CD8-positive, alpha-beta T cell (primary cell): ENCODE measurements at regions of chr6 and their contacts with region 1.

Region 1: GRCh38 chr6:85354761-85355618 is 94.9 kb upstream of the NT5E start:
- DNase-seq: peak; percentile 14 to 81 (median 64)
- ATAC-seq: peak; percentile 87
- H3K4me3 ChIP-seq: no peak overlapping the region
- H3K4me3 Mint-ChIP-seq: no peak overlapping the region
- H3K27ac ChIP-seq: no peak overlapping the region
- H3K27ac Mint-ChIP-seq: no peak overlapping the region
- H3K4me1 ChIP-seq: no peaks in the 10 kb centered on the region
- H3K4me1 Mint-ChIP-seq: peaks cover 3% of the 10 kb centered on the region
- H3K27me3 ChIP-seq: peaks cover 0 to 2% of the 10 kb centered on the region in 2 experiments
- H3K27me3 Mint-ChIP-seq: no peaks in the 10 kb centered on the region
- CTCF ChIP-seq: peak; percentile 97

Region 2: GRCh38 chr6:85449818-85450759 is 95.1 kb after region 1 on chr6 and contains the start of gene NT5E:
- CTCF ChIA-PET with region 1: interaction called, 14 read pairs
- POLR2A ChIA-PET with region 1: no interaction called
- intact Hi-C with region 1: no loop called
- DNase-seq: peak; percentile 19 to 78 (median 61)
- ATAC-seq: peak; percentile 58
- H3K4me3 ChIP-seq: peak within 1 kb of the TSS; percentile 64 to 65
- H3K4me3 Mint-ChIP-seq: peak within 1 kb of the TSS; percentile 98
- H3K27ac ChIP-seq: peak within 1 kb of the TSS; percentile 40 to 71
- H3K27ac Mint-ChIP-seq: peak within 1 kb of the TSS; percentile 97
- H3K4me1 ChIP-seq: peaks cover 44% of the 10 kb centered on the region
- H3K4me1 Mint-ChIP-seq: peaks cover 62% of the 10 kb centered on the region
- H3K27me3 ChIP-seq: peaks cover 0 to 6% of the 10 kb centered on the region in 2 experiments
- H3K27me3 Mint-ChIP-seq: no peaks in the 10 kb centered on the region
- CTCF ChIP-seq: no peak
- total RNA-seq, gene NT5E: 12.7 to 13.0 TPM

Region 3: GRCh38 chr6:85460921-85461797 is 106.2 kb after region 1 on chr6:
- CTCF ChIA-PET with region 1: interaction called, 17 read pairs
- POLR2A ChIA-PET with region 1: interaction called, 3 read pairs
- intact Hi-C with region 1: no loop called
- DNase-seq: peak in 7 of 9 experiments; percentile 26 to 75 (median 62)
- ATAC-seq: peak; percentile 64
- H3K4me3 ChIP-seq: peak overlapping the region in 1 of 2 experiments; percentile 0
- H3K4me3 Mint-ChIP-seq: peak overlapping the region; percentile 70
- H3K27ac ChIP-seq: peak overlapping the region; percentile 22 to 69
- H3K27ac Mint-ChIP-seq: peak overlapping the region; percentile 92
- H3K4me1 ChIP-seq: peaks cover 100% of the 10 kb centered on the region
- H3K4me1 Mint-ChIP-seq: peaks cover 98% of the 10 kb centered on the region
- H3K27me3 ChIP-seq: no peaks in the 10 kb centered on the region
- H3K27me3 Mint-ChIP-seq: peaks cover 2% of the 10 kb centered on the region
- CTCF ChIP-seq: no peak

Region 4: GRCh38 chr6:85476532-85476931 is 121.5 kb after region 1 on chr6:
- CTCF ChIA-PET with region 1: interaction called, 130 read pairs
- POLR2A ChIA-PET with region 1: no interaction called
- intact Hi-C with region 1: no loop called
- DNase-seq: no peak
- ATAC-seq: no peak
- H3K4me3 ChIP-seq: no peak overlapping the region
- H3K4me3 Mint-ChIP-seq: no peak overlapping the region
- H3K27ac ChIP-seq: no peak overlapping the region
- H3K27ac Mint-ChIP-seq: peak overlapping the region; percentile 29
- H3K4me1 ChIP-seq: no peaks in the 10 kb centered on the region
- H3K4me1 Mint-ChIP-seq: peaks cover 4% of the 10 kb centered on the region
- H3K27me3 ChIP-seq: no peaks in the 10 kb centered on the region
- H3K27me3 Mint-ChIP-seq: no peaks in the 10 kb centered on the region
- CTCF ChIP-seq: no peak

Region 5: DNA sequence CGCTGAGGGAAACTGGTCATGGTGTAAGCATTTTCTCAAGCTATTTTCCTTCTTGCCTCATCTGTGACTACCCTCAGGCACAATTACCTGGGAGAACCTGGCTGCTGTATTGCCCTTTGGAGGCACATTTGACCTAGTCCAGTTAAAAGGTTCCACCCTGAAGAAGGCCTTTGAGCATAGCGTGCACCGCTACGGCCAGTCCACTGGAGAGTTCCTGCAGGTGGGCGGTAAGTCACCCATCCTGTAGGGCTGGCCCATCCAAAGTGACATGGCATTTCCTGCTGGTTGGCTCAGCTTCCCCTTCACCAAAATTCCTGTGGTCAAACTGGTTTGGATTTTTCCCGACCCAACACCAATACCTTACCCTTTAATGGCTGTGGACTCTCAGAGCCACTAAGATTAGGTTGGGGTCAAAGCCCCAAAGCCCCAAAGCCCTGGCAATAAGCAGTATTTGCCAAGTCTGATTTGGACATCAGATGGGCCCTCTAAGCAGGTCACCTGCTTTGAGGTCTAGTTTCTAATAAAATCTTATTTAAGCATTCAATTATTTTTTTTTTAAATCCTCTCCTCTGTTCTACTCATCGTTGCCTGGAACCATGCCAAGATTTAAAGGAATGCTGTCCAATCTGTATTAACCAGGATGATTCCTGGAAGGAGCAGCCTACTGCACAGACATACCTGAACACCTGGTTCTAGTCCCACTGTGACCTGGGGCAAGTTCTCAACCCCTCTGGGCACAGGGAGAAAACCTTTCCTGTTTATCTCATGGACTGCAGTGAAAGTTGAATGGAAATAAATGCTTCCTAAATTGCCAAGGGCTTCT is 135.7 kb after region 1 on chr6:
- CTCF ChIA-PET with region 1: interaction called, 130 read pairs
- POLR2A ChIA-PET with region 1: no interaction called
- intact Hi-C with region 1: no loop called
- DNase-seq: no peak
- ATAC-seq: no peak
- H3K4me3 ChIP-seq: no peak overlapping the region
- H3K4me3 Mint-ChIP-seq: no peak overlapping the region
- H3K27ac ChIP-seq: no peak overlapping the region
- H3K27ac Mint-ChIP-seq: no peak overlapping the region
- H3K4me1 ChIP-seq: no peaks in the 10 kb centered on the region
- H3K4me1 Mint-ChIP-seq: no peaks in the 10 kb centered on the region
- H3K27me3 ChIP-seq: no peaks in the 10 kb centered on the region
- H3K27me3 Mint-ChIP-seq: no peaks in the 10 kb centered on the region
- CTCF ChIP-seq: no peak

Region 6: GRCh38 chr6:85537055-85537494 is 182.1 kb after region 1 on chr6:
- CTCF ChIA-PET with region 1: interaction called, 37 read pairs
- POLR2A ChIA-PET with region 1: interaction called, 3 read pairs
- intact Hi-C with region 1: loop called (anchors 1 kb)
- DNase-seq: peak in 2 of 9 experiments; percentile 2 to 21
- ATAC-seq: no peak
- H3K4me3 ChIP-seq: no peak overlapping the region
- H3K4me3 Mint-ChIP-seq: no peak overlapping the region
- H3K27ac ChIP-seq: no peak overlapping the region
- H3K27ac Mint-ChIP-seq: no peak overlapping the region
- H3K4me1 ChIP-seq: no peaks in the 10 kb centered on the region
- H3K4me1 Mint-ChIP-seq: peaks cover 2% of the 10 kb centered on the region
- H3K27me3 ChIP-seq: no peaks in the 10 kb centered on the region
- H3K27me3 Mint-ChIP-seq: no peaks in the 10 kb centered on the region
- CTCF ChIP-seq: peak; percentile 92

Region 7: GRCh38 chr6:85593438-85594196 is 238.6 kb after region 1 on chr6 and contains the start of gene SNX14:
- CTCF ChIA-PET with region 1: no interaction called
- POLR2A ChIA-PET with region 1: no interaction called
- intact Hi-C with region 1: no loop called
- DNase-seq: peak; percentile 59 to 90 (median 76)
- ATAC-seq: peak; percentile 78
- H3K4me3 ChIP-seq: peak within 1 kb of the TSS; percentile 90 to 95
- H3K4me3 Mint-ChIP-seq: peak within 1 kb of the TSS; percentile 97
- H3K27ac ChIP-seq: peak within 1 kb of the TSS; percentile 84 to 88
- H3K27ac Mint-ChIP-seq: peak within 1 kb of the TSS; percentile 98
- H3K4me1 ChIP-seq: peaks cover 20% of the 10 kb centered on the region
- H3K4me1 Mint-ChIP-seq: peaks cover 53% of the 10 kb centered on the region
- H3K27me3 ChIP-seq: no peaks in the 10 kb centered on the region
- H3K27me3 Mint-ChIP-seq: no peaks in the 10 kb centered on the region
- CTCF ChIP-seq: no peak
- total RNA-seq, gene SNX14: 34.2 to 38.1 TPM

Region 8: DNA sequence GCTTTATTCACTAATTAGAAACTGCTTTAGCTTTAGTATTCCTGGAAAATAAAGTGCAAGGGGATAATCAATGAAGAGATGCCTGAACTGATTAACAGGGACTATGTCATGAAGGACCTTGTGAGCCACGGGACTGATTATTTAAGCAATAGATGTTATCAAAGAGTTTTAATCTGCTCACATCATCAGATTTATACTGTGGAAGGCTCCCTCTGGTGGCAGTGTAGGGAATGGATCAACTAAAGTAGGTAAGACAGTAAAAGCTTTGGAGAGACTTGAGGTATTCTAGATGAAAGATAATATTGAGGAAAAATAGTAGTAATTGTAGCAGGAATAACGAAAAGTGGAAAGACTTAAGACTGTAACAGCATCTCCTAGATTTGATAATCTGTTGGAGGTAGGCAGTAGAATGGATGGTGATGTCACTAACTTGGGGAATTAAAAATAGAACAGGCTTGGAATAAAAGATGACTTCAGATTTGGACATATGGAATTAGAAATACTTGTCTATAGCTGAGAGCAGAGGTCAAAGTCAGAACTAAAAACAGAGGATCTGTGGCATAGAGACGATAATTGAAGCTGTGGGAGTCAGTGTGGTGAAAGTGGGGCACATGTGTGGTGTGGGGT is 1502.1 kb after region 1 on chr6:
- CTCF ChIA-PET with region 1: no interaction called
- POLR2A ChIA-PET with region 1: no interaction called
- intact Hi-C with region 1: loop called in 1 of 2 experiments (anchors 10 kb)
- DNase-seq: peak in 1 of 9 experiments; percentile 9
- ATAC-seq: no peak
- H3K4me3 ChIP-seq: no peak overlapping the region
- H3K4me3 Mint-ChIP-seq: no peak overlapping the region
- H3K27ac ChIP-seq: no peak overlapping the region
- H3K27ac Mint-ChIP-seq: no peak overlapping the region
- H3K4me1 ChIP-seq: no peaks in the 10 kb centered on the region
- H3K4me1 Mint-ChIP-seq: no peaks in the 10 kb centered on the region
- H3K27me3 ChIP-seq: no peaks in the 10 kb centered on the region
- H3K27me3 Mint-ChIP-seq: no peaks in the 10 kb centered on the region
- CTCF ChIP-seq: peak; percentile 25